Activated CD8-positive, alpha-beta T cell treated with anti-CD3 and anti-CD28 coated beads for 36 hours (primary cell): ENCODE measurements at regions of chr4 and their contacts with region 1.

Region 1: GRCh38 chr4:40309250-40309774 is 25.8 kb upstream of the CHRNA9 start:
- DNase-seq: peak; percentile 98
- ATAC-seq: peak; percentile 54
- H3K4me3 Mint-ChIP-seq: peak overlapping the region; percentile 54
- H3K27ac Mint-ChIP-seq: peak overlapping the region; percentile 83
- H3K4me1 Mint-ChIP-seq: peaks cover 90% of the 10 kb centered on the region
- H3K27me3 Mint-ChIP-seq: no peaks in the 10 kb centered on the region
- CTCF ChIP-seq: peak; percentile 90

Region 2: DNA sequence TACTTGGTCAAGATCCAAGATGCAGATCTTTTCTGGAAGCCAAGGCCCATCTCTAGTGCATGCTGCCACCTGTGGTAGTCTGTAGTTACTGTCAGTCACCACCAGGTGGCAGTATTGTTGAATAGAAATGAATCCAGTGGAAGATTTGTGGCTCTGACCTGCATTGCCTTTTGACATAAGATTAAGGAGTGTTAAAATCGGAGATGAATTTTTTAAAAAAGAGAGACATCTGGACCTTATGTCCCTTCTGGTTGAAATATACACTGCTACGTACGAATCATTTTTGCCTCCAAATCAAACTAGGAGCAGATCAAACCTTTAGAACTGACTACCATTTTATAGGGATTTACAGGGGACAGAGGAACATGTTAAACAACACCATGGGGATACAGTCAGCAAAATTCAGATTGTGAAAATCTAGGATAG is 159.3 kb before region 1 on chr4:
- CTCF ChIA-PET with region 1: interaction called, 12 read pairs
- POLR2A ChIA-PET with region 1: interaction called, 3 read pairs
- intact Hi-C with region 1: loop called (anchors 5 kb)
- DNase-seq: peak; percentile 83
- ATAC-seq: peak; percentile 98
- H3K4me3 Mint-ChIP-seq: no peak overlapping the region
- H3K27ac Mint-ChIP-seq: peak overlapping the region; percentile 68
- H3K4me1 Mint-ChIP-seq: peaks cover 41% of the 10 kb centered on the region
- H3K27me3 Mint-ChIP-seq: no peaks in the 10 kb centered on the region
- CTCF ChIP-seq: peak; percentile 95

Region 3: DNA sequence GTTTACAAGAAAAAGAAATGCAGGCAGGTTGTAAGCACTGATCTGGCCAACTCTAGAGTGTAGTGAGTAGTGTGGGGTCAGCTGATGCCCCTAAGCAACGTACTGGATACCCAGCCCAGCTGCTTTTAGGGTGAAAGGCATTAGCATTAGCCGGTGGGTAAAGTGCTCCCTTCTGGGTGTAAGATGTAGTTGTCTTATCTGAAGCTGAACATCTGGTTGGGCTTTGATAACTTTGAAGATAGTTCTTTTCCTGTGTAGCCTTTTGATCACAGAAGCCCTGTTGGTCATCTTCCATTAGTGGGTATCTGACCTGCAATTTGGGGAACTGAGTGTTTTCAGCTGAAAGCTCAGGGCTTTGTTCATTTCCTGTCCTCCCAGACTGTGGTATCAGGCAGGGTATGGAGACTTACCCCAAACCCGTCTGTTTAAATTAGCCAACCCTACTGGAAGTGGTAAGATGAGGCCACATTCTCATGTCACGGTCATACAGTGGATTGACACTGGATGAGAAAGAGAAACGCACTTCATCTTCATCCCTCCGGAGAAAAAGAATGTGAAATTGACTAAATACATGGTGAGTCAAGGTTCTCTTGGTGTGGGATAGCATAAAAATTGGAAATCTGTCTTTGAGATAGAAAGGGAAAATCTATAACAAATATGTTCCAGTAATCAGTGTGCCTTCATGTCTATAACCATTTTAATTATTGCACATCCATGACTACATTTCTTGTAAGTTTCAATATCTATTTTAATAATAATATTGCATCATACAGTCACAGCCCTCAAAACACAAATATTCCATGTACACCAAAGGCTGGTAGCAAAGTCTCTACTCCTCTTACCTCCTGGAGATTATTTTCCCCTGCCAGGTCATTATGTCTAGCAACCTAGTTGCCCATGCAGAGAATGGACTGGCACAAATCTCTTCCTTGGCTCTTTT is 103.8 kb before region 1 on chr4:
- CTCF ChIA-PET with region 1: interaction called, 26 read pairs
- POLR2A ChIA-PET with region 1: interaction called, 326 read pairs
- intact Hi-C with region 1: loop called (anchors 2 kb)
- DNase-seq: peak; percentile 65
- ATAC-seq: peak; percentile 52
- H3K4me3 Mint-ChIP-seq: peak overlapping the region; percentile 99
- H3K27ac Mint-ChIP-seq: peak overlapping the region; percentile 99
- H3K4me1 Mint-ChIP-seq: peaks cover 35% of the 10 kb centered on the region
- H3K27me3 Mint-ChIP-seq: no peaks in the 10 kb centered on the region
- CTCF ChIP-seq: no peak

Region 4: DNA sequence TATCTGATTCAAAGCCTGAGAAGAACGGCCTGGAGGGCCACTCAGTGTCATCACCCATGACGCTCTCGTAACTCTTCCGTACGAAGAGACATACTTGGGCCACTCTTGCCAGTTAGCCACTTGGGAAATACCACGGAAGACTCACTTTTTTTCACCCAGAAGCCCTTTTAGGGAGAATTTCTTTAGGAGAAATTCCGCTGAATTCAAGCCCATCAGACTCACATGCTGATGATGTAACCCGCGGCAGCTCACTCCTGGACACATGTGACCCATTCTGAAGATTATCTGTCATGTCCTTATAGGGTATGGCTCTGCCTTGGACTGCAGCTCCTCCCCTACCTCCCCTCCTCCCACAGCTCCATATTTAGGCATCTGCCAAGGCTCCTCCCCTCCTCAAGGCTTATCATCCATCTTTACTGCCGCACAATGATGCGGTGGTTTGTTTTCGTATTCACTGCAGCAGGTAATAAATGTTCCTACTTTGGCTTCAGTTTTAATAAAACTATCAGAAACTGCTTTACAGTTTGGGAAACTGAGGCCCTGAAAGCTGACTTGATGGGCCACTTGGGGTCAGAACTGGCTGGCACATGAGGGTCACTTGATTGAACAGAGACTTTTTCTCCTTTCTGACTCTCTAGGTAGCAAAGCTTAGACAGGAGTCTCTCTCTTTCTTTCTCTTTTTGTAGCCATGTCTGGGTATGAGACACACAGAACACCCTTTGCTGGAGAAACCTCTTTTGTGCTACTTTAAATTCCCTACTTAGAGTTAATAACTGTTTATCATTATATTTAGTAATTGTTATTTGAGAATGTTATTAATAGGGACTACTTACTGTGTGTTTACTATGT is 70.4 kb before region 1 on chr4:
- CTCF ChIA-PET with region 1: interaction called, 32 read pairs
- POLR2A ChIA-PET with region 1: interaction called, 46 read pairs
- intact Hi-C with region 1: no loop called
- DNase-seq: peak; percentile 93
- ATAC-seq: peak; percentile 90
- H3K4me3 Mint-ChIP-seq: peak overlapping the region; percentile 81
- H3K27ac Mint-ChIP-seq: peak overlapping the region; percentile 96
- H3K4me1 Mint-ChIP-seq: peaks cover 82% of the 10 kb centered on the region
- H3K27me3 Mint-ChIP-seq: no peaks in the 10 kb centered on the region
- CTCF ChIP-seq: no peak

Region 5: DNA sequence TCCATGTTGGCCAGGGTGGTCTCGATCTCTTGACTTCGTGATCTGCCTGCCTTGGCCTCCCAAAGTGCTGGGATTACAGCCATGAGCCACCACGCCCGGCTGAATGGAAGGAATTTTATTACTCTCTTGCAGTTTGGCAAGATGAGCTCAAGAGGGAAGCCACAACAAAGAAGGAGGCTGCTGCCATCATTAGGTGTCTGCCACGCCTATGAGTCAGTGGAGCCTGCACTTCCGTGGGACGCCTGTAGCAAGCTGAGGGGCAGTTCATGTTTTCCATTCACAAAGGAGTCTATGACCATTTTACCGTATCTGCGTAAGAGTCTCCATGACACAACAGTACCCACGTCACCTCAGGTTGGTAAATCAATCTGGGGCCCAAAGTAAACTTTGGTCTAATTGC is 25.3 kb before region 1 on chr4:
- CTCF ChIA-PET with region 1: interaction called, 20 read pairs
- POLR2A ChIA-PET with region 1: interaction called, 6 read pairs
- intact Hi-C with region 1: loop called (anchors 2 kb)
- DNase-seq: peak; percentile 95
- ATAC-seq: peak; percentile 89
- H3K4me3 Mint-ChIP-seq: peak overlapping the region; percentile 45
- H3K27ac Mint-ChIP-seq: peak overlapping the region; percentile 98
- H3K4me1 Mint-ChIP-seq: peaks cover 64% of the 10 kb centered on the region
- H3K27me3 Mint-ChIP-seq: no peaks in the 10 kb centered on the region
- CTCF ChIP-seq: peak; percentile 65